Posterior vena cava (tissue), 2 donors: ENCODE measurements at regions of chr6 and their contacts with region 1.

Region 1: GRCh38 chr6:160583794-160584193 is 80.3 kb downstream of the LPA start:
- DNase-seq: no peak

Region 2: DNA sequence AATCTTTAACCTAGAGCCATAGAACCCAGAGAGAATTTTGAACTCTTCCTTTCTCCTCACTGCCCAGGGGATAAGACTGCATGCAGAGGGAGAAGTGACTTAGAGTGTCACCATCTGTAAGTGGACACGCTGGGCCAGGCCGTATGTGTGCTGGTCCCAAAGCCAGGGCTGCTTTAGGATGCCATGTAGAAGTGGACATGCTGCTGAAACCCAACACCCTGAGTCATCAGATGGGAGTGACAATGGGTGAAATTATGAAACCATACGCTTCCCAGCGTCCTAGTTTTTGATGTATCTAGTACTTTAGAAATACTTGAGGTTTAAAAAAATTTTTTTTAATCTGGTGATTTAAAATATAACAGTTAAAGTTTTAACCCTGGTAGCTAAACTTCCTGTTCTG is 1223.5 kb before region 1 on chr6:
- intact Hi-C with region 1: loop called in 1 of 2 experiments (anchors 5 kb)
- DNase-seq: no peak